ENCODE measurements at regions of chr6 and their contacts with region 1.

Region 1: GRCh38 chr6:104771258-104771832 is 88.4 kb downstream of the HACE1 start:
- DNase-seq: no peak
- ATAC-seq: no peak
- H3K4me3 ChIP-seq: no peak overlapping the region
- H3K27ac ChIP-seq: no peak overlapping the region
- H3K4me1 ChIP-seq: no peaks in the 10 kb centered on the region
- H3K27me3 ChIP-seq: no peaks in the 10 kb centered on the region

Region 2: GRCh38 chr6:104525677-104526312 is 245.6 kb before region 1 on chr6:
- intact Hi-C with region 1: loop called in 1 of 2 experiments (anchors 10 kb)
- DNase-seq: peak; percentile 75 to 89
- ATAC-seq: peak; percentile 93
- H3K4me3 ChIP-seq: peak overlapping the region; percentile 36 to 84
- H3K27ac ChIP-seq: no peak overlapping the region
- H3K4me1 ChIP-seq: peaks cover 2 to 9% of the 10 kb centered on the region in 2 donors
- H3K27me3 ChIP-seq: no peaks in the 10 kb centered on the region

Region 3: DNA sequence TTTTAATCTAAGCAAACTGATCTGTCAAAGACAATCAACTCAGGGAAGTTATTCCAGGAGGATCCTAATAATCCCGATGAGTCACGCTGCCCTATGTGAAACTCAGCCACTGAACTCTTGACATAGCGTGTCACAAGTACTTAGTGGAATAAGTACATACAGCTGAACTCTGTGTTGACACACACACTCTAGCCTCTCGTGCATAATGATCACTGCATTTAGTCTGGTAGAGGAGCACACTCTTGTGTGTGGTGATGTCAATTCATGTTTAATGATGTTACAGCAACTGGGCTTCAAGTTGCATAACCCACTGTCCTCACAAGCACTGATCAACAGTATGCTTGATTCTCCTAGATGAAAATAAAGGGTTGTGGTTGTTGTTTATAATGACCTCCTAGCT is 60.0 kb before region 1 on chr6:
- intact Hi-C with region 1: no loop called
- DNase-seq: no peak
- ATAC-seq: no peak
- H3K4me3 ChIP-seq: no peak overlapping the region
- H3K27ac ChIP-seq: no peak overlapping the region
- H3K4me1 ChIP-seq: no peaks in the 10 kb centered on the region
- H3K27me3 ChIP-seq: no peaks in the 10 kb centered on the region